Colonic mucosa (tissue), 4 donors: ENCODE measurements at regions of chr17 and their contacts with region 1.

Region 1: DNA sequence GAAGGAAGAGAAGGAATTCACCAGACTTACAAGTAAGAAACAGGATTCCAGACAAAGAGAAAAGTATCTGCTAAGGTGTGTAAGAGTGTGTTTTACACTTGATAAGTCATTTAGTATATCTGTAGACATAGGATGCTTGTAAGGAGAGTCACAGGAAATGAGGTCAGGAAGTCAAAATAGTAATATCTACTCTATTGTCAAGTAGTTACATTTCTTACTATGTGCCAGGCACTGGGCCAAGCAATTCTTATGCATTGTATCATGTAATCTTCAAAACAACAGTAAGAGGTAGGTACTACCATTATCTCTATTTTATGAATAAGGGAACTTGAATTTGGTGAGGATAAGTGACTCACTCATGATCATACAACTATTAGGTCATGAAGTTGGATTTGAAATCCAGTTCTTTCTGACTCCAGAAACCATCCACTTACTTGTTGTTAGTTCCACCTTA is 129.1 kb downstream of the SNX11 start:
- DNase-seq: no peak
- H3K4me3 ChIP-seq: no peak overlapping the region
- H3K27ac ChIP-seq: no peak overlapping the region
- H3K4me1 ChIP-seq: no peaks in the 10 kb centered on the region
- H3K27me3 ChIP-seq: no peaks in the 10 kb centered on the region
- CTCF ChIP-seq: no peak

Region 2: GRCh38 chr17:47999582-47999981 is 237.1 kb before region 1 on chr17:
- intact Hi-C with region 1: no loop called
- DNase-seq: no peak
- H3K4me3 ChIP-seq: no peak overlapping the region
- H3K27ac ChIP-seq: no peak overlapping the region
- H3K4me1 ChIP-seq: no peaks in the 10 kb centered on the region
- H3K27me3 ChIP-seq: no peaks in the 10 kb centered on the region
- CTCF ChIP-seq: no peak

Region 3: DNA sequence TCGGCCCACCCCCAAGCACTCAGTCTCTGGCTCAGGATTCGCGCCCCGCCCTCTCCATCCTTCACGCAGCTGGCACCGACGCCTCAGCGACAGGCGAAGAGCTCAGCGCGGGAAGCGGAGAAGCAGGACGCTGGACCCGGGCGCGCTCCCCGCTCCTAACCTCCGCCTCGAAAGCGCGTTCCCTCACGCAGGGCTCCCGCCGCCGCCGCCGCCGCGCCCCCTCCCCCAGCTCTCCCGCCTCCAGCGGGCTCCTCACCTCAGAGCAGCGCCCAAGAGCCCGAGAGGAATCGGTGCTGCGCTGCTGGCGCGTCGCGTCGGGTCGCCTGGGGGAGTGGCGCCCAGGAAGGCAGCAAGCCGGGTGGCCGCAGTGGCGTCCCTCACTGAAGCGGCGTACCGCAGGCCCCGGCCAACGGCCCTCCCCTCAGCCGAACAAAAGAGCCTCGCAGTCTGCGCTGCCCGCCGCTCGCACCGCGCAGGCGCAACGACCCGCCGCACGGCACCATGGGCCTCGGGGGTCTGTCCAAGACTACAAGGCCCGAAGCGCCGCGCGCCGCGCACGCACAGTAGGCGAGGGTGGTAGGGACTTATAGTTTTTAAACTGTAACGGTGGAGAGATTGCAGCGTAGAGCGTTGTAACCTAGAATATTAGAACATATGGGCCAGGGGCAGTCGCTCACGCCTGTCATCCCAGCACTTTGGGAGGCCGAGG is 135.5 kb before region 1 on chr17 and contains the start of gene CBX1:
- intact Hi-C with region 1: no loop called
- DNase-seq: peak; percentile 96
- H3K4me3 ChIP-seq: peak within 1 kb of the TSS; percentile 64
- H3K27ac ChIP-seq: peak within 1 kb of the TSS; percentile 76
- H3K4me1 ChIP-seq: peaks cover 5% of the 10 kb centered on the region
- H3K27me3 ChIP-seq: no peaks in the 10 kb centered on the region
- CTCF ChIP-seq: no peak
- total RNA-seq, gene CBX1: 32.3 to 53.0 TPM

Region 4: DNA sequence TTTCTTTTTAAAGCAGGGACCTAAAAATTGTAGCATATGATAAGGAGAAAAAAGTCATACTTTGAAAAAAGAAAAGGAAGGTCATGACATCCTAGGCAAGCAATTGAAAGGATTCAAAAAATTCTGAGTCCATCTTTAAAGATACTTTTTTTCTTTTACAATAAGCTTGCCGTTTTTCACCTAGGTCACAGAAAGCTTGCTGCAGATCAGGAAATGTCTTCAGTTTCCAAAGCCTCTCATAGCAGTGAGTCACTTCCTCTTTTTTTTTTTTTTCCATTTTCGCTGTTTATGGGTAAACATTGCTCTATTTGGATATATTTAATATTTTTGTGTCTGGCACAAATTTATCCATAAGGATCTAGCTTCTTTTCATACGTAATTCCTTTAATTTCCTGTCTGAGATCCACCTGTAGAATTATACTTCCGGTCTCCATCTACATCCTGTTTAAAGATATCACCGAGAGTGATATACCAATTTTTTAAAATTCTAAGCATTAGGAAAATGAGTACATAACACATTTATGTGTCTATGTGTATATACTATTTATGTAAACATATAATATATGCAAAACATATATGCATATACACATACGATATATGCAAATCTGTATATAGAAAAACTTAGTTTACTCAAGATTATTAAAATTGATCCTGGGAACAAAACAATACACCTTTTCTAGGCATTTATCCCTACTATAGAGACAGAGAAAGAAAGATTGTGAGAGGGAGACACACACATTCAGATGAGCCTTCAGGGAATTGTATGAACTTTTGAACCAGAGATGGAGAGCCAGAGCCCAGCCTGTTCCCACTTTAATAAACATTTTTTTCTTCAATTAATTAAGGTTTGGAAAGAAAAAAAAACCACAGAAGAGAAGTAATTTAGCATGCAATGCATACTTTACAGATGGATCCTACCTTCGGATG is 58.9 kb after region 1 on chr17:
- intact Hi-C with region 1: loop called (anchors 10 kb)
- DNase-seq: no peak
- H3K4me3 ChIP-seq: no peak overlapping the region
- H3K27ac ChIP-seq: no peak overlapping the region
- H3K4me1 ChIP-seq: no peaks in the 10 kb centered on the region
- H3K27me3 ChIP-seq: no peaks in the 10 kb centered on the region
- CTCF ChIP-seq: no peak